ENCODE measurements at regions of chr7 and their contacts with region 1.

Region 1: DNA sequence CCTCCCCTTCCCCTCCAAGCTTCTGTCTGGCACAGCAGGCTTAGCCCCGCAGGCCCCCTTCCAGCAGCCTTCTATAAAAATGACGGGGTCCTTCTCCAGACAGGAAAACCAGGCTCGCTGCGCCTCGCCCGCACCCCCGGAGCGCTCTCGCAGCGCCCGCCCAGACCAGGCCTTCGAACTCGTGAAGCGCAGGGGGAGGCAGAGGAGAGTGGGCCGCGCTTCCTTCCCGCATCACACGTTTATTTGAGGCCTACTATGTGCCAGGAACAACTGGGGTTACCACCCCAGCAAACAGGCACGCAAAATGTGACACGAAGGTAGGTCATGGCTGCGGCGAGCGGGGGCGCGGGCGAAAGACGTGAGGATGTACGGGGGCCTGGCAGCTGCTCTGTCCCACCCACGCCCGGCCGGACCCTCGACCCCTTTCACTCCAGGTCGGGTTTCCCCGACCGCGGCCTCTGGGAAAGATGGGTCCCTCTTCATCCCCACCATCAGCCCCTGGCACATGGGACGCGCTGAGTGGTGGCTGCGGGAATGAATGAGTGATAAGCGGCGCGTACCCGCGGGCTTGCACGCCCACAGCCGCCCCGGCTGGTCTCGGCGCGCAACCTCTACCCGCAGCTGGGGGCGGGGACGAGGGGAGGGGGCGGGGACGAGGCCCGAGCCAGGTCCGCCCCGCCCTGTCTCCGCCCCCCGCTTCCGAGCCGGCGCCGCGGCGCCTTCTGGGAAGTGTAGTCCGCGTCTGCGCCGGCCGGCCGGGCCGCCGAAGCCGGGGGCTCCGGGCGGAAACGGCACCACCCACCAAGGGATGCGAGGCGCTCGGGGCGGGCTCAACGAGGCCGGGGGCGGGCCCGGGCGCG is 59.1 kb downstream of the ZNF467 start:
- DNase-seq: peak; percentile 67 to 77
- ATAC-seq: peak; percentile 86 to 87
- H3K4me3 ChIP-seq: peak overlapping the region; percentile 69 to 79 (median 70)
- H3K27ac ChIP-seq: peak overlapping the region; percentile 65 to 78 (median 76)
- H3K4me1 ChIP-seq: peaks cover 20 to 25% of the 10 kb centered on the region in 2 donors
- H3K27me3 ChIP-seq: no peaks in the 10 kb centered on the region
- CTCF ChIP-seq: no peak
- POLR2A ChIP-seq: no peak

Region 2: GRCh38 chr7:148884299-148885022 is 829.8 kb before region 1 on chr7:
- in situ Hi-C with region 1: no loop called
- intact Hi-C with region 1: loop called (anchors 10 kb)
- DNase-seq: peak; percentile 88 to 92
- ATAC-seq: peak; percentile 91 to 93
- H3K4me3 ChIP-seq: peak overlapping the region; percentile 74 to 92 (median 85)
- H3K27ac ChIP-seq: peak overlapping the region; percentile 87 to 96 (median 92)
- H3K4me1 ChIP-seq: peaks cover 7 to 8% of the 10 kb centered on the region in 2 donors
- H3K27me3 ChIP-seq: peaks cover 0 to 3% (median 0%) of the 10 kb centered on the region in 3 donors
- CTCF ChIP-seq: no peak
- POLR2A ChIP-seq: peak; percentile 91 to 92

Region 3: GRCh38 chr7:149624419-149625339 is 89.6 kb before region 1 on chr7:
- in situ Hi-C with region 1: no loop called
- intact Hi-C with region 1: loop called (anchors 2 kb)
- DNase-seq: peak; percentile 87 to 92
- ATAC-seq: peak; percentile 90 to 92
- H3K4me3 ChIP-seq: peak overlapping the region; percentile 86 to 96 (median 90)
- H3K27ac ChIP-seq: peak overlapping the region; percentile 78 to 91 (median 90)
- H3K4me1 ChIP-seq: peaks cover 16 to 27% of the 10 kb centered on the region in 2 donors
- H3K27me3 ChIP-seq: no peaks in the 10 kb centered on the region
- CTCF ChIP-seq: peak; percentile 86 to 99 (median 96)
- POLR2A ChIP-seq: peak; percentile 76 to 83

Region 4: DNA sequence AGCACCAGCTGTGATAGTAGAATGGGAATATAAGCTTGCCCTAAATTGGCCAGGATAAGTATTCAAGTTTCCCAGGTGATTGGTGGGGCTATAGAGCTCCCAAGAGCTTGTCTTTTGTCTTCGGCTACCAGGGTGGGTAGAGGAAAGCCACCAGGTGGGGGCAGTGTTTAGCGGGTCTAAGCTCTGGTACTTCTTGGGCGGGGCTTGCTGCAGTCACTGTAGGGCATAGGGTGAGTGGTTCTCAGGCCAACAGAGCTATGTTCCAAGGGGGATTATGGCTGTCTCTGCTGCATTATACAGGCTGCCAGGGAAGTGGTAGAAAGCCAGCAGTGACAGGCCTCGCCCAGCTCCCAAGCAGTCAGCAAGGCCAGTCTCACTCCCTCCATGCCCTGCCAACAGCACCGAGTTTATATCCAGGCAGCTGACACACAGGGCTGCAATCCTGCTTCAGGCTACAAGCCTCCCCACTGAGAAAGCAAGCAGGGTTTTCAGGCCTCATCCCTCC is 51.6 kb before region 1 on chr7:
- in situ Hi-C with region 1: no loop called
- intact Hi-C with region 1: loop called (anchors 1 kb)
- DNase-seq: peak; percentile 45 to 81
- ATAC-seq: peak; percentile 95 to 97
- H3K4me3 ChIP-seq: no peak overlapping the region
- H3K27ac ChIP-seq: peak overlapping the region; percentile 53 to 71 (median 68)
- H3K4me1 ChIP-seq: peaks cover 6 to 7% of the 10 kb centered on the region in 2 donors
- H3K27me3 ChIP-seq: no peaks in the 10 kb centered on the region
- CTCF ChIP-seq: peak; percentile 47 to 78 (median 68)
- POLR2A ChIP-seq: no peak

Region 5: DNA sequence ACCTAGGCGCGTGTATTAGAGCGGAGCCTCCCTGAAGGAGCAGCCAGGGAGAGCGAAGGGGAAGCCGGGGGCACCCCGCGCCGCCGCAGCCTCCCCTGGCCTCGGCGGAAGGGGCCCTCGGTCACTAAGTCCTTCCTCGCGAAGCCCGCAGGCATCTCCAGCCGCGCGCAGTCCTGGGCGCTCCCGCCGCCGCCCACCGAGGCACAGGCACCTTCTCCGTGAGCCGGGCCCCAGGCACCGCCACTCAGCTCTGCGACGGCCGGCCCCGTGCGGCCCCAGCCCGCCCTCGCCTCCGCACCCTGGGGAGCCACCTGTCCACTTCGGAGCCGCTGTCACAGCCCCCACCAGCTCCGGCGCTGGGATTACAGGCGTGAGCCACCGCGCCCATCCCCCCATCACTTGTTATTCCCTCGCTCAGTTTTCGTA is 21.7 kb before region 1 on chr7:
- in situ Hi-C with region 1: no loop called
- intact Hi-C with region 1: no loop called
- DNase-seq: no peak
- ATAC-seq: no peak
- H3K4me3 ChIP-seq: peak overlapping the region in 1 of 4 donors; percentile 3
- H3K27ac ChIP-seq: no peak overlapping the region
- H3K4me1 ChIP-seq: no peaks in the 10 kb centered on the region
- H3K27me3 ChIP-seq: peaks cover 26 to 34% (median 32%) of the 10 kb centered on the region in 3 donors
- CTCF ChIP-seq: no peak
- POLR2A ChIP-seq: no peak

Region 6: DNA sequence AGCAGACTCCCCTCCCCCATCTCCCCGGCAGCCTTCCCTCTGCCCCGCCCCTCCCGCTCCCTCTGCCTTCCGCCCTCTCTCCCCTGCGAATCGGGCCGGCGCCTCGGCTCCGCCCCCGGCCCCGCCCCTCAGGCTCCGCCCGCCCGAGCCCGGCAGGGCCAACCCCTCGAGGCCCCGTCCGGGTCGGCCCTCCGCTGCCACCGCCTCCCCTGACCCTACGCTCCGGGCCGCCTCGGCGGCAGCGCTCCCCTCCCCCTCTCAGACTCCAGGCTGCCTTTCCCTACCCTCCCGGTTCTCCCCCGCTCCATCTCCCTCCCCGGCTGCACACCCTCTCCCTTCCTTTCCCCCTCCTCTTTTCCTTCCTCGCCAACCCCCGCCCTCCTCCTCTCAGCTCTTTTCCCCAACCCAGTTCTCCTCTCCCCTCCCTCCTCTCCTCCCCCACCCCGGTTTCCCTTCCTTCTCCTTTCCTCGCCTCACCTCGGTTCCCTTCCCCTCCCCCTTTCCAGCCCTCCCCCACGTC is 57.5 kb after region 1 on chr7:
- in situ Hi-C with region 1: no loop called
- intact Hi-C with region 1: loop called (anchors 1 kb)
- DNase-seq: peak; percentile 78 to 83
- ATAC-seq: peak; percentile 90 to 91
- H3K4me3 ChIP-seq: peak overlapping the region; percentile 71 to 83 (median 74)
- H3K27ac ChIP-seq: peak overlapping the region; percentile 50 to 67 (median 58)
- H3K4me1 ChIP-seq: peaks cover 5 to 23% of the 10 kb centered on the region in 2 donors
- H3K27me3 ChIP-seq: peaks cover 8 to 13% (median 9%) of the 10 kb centered on the region in 3 donors
- CTCF ChIP-seq: no peak
- POLR2A ChIP-seq: peak in 1 of 2 donors; percentile 24

Region 7: GRCh38 chr7:149838224-149838947 is 124.1 kb after region 1 on chr7 and contains the start of gene ZNF862:
- in situ Hi-C with region 1: no loop called
- intact Hi-C with region 1: loop called (anchors 5 kb)
- DNase-seq: peak; percentile 97 to 98
- ATAC-seq: peak; percentile 98 to 99
- H3K4me3 ChIP-seq: peak within 1 kb of the TSS; percentile 76 to 99 (median 87)
- H3K27ac ChIP-seq: peak within 1 kb of the TSS; percentile 80 to 95 (median 90)
- H3K4me1 ChIP-seq: peaks cover 23 to 24% of the 10 kb centered on the region in 2 donors
- H3K27me3 ChIP-seq: no peaks in the 10 kb centered on the region
- CTCF ChIP-seq: no peak
- POLR2A ChIP-seq: peak; percentile 62 to 85
- total RNA-seq, gene ZNF862: 2.9 to 10.7 (median 7.0) TPM

Region 8: DNA sequence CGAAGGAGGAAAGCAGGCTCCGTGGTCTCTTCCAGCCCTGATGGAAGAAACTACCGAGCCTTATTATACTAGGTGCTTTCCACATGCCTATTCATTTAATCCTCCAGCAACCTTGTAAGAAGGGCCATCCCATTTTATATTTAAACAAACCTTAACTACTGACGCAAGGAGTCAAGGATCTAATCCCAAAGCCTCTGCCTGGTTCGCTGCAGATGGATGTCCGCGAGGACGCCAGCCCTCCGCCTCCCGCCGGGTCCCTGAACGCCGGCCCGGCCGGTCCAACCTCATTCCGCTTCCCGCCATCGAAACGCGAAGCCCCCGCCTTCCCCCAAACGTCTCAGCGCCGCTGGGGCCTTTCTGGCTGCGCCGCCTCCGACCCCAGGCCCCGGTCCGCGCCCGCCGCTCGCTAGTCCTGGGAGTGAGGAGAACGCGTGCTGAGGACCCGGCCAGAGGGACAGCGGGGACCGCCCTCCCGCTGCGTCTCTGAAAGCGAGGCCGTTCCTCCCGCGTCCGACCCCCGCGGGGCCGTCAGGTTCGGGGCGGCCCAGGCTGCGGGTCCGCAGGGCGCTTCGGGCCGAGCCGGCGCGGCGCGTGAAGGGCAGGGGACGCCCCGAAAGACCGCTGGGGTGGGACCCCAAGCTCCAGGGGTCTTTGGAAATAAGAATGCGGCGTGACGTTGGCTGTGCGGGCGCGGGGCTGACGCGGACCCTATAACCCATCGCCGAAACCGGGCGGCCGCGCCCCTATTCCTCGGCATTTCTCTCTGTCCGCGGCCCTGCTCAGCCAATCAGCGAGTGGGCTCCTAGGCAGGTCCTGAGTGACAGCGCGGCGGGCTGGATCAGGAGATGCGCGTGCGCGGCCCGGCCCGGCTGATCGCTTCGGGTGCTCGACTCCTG is 159.0 kb after region 1 on chr7 and contains the start of gene ATP6V0E2:
- in situ Hi-C with region 1: no loop called
- intact Hi-C with region 1: loop called (anchors 2 kb)
- DNase-seq: peak; percentile 95
- ATAC-seq: peak; percentile 91 to 92
- H3K4me3 ChIP-seq: peak within 1 kb of the TSS; percentile 71 to 84 (median 73)
- H3K27ac ChIP-seq: peak within 1 kb of the TSS; percentile 86 to 88 (median 87)
- H3K4me1 ChIP-seq: peaks cover 13 to 14% of the 10 kb centered on the region in 2 donors
- H3K27me3 ChIP-seq: no peaks in the 10 kb centered on the region
- CTCF ChIP-seq: peak in 2 of 5 experiments; percentile 5 to 9
- POLR2A ChIP-seq: peak; percentile 80 to 82
- total RNA-seq, gene ATP6V0E2: 9.0 to 46.3 (median 12.9) TPM

Measured in gastrocnemius medialis (tissue), 4 donors.